Activated CD4-positive, alpha-beta T cell treated with anti-CD3 and anti-CD28 coated beads, Interleukin-2, amount 10 ng/mL, durations not matched to agents 24 days and 14 days (primary cell): ENCODE measurements at regions of chr10 and their contacts with region 1.

Region 1: GRCh38 chr10:100508691-100509150 is 10.9 kb downstream of the SEC31B start:
- DNase-seq: peak; percentile 90
- H3K4me3 Mint-ChIP-seq: peak overlapping the region; percentile 80
- H3K27ac Mint-ChIP-seq: peak overlapping the region; percentile 89
- H3K4me1 Mint-ChIP-seq: peaks cover 91% of the 10 kb centered on the region
- H3K27me3 Mint-ChIP-seq: no peaks in the 10 kb centered on the region

Region 2: DNA sequence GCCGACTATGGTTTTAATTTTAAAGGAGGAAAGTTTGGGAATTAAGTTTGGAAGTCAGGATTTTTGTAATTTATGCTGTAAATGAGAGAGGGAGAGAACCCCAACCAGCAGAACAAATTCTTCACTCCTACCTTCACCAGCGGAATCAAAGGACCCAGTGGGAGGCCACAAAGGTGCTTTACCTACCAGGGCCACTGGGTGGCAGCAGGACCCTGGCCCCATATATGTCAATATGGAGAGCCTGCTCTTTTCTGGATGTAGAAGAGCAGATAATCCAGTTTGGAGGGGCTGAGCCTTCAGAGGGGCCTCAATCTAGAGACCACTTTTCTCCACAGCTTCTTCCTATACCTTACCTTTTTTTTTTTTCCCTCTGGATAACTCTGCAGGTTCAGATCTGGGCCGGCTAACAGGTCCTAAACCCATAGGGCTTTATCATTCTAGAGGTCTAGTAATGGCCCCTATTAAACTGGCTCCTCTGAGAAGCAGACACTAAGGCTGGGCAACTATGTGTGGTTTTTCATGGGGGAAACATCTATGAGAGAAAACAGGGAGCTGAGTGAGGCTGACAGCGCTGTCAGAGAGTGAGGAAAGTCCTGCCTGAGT is 170.2 kb before region 1 on chr10:
- intact Hi-C with region 1: loop called (anchors 1 kb)
- DNase-seq: peak; percentile 95
- H3K4me3 Mint-ChIP-seq: no peak overlapping the region
- H3K27ac Mint-ChIP-seq: peak overlapping the region; percentile 27
- H3K4me1 Mint-ChIP-seq: peaks cover 24% of the 10 kb centered on the region
- H3K27me3 Mint-ChIP-seq: peaks cover 12% of the 10 kb centered on the region

Region 3: DNA sequence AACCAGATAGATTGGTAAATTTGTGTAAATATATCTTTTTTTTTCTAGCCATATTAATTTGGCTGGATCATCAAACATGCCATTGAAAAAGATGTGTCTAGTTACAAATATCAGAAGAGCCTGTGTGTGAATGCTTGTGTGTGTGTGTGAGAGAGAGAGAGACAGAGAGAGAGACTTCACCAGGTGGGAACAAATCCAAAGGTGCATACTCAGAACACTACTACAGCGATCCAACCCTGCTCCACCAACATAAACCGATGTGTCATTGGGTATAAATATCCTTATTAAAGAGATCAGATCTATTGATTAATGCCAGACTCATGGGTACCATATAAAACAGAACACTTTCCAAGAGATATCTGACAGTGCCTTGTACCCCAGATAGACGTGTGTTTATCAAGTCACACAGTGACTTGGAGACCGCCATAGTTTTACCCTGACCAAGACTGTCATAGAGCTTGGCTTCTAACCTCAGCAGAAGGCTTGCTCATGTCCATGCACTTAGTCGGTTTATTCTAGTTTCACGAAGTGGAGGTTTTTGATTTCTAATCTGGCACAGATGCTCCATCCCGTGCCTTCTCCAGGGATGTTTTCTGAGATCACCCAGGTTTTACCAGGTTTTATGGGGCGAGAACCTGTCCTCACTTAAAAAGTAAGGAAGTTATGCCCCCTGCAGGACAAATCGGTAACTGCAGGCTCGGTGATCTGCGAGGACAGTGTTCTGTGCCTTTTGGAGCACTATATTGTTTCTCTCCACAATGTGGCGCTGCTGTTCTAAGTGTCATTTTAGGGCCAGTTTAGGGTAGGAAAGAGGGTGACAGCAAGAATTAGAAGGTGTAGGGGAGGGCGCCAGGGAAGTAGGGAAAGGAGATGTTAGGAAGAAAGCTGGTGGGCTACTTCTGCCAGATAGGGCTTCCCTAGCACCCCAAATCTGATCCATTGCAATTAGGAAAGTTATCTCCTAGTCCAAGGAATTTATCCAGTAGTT is 75.2 kb before region 1 on chr10:
- intact Hi-C with region 1: loop called (anchors 1 kb)
- DNase-seq: peak; percentile 99
- H3K4me3 Mint-ChIP-seq: no peak overlapping the region
- H3K27ac Mint-ChIP-seq: peak overlapping the region; percentile 17
- H3K4me1 Mint-ChIP-seq: peaks cover 12% of the 10 kb centered on the region
- H3K27me3 Mint-ChIP-seq: no peaks in the 10 kb centered on the region

Region 4: GRCh38 chr10:100498059-100498458 is 10.7 kb before region 1 on chr10:
- intact Hi-C with region 1: loop called (anchors 1 kb)
- DNase-seq: no peak
- H3K4me3 Mint-ChIP-seq: peak overlapping the region; percentile 44
- H3K27ac Mint-ChIP-seq: peak overlapping the region; percentile 75
- H3K4me1 Mint-ChIP-seq: peaks cover 77% of the 10 kb centered on the region
- H3K27me3 Mint-ChIP-seq: no peaks in the 10 kb centered on the region

Region 5: GRCh38 chr10:100529475-100530298 is 21.0 kb after region 1 on chr10 and contains the start of gene NDUFB8:
- intact Hi-C with region 1: loop called (anchors 1 kb)
- DNase-seq: peak; percentile 97
- H3K4me3 Mint-ChIP-seq: peak within 1 kb of the TSS; percentile 87
- H3K27ac Mint-ChIP-seq: peak within 1 kb of the TSS; percentile 91
- H3K4me1 Mint-ChIP-seq: peaks cover 28% of the 10 kb centered on the region
- H3K27me3 Mint-ChIP-seq: no peaks in the 10 kb centered on the region
- total RNA-seq, gene NDUFB8: 323 TPM in 2 replicates